Posterior cingulate gyrus (tissue), 11 donors: ENCODE measurements at regions of chr9 and their contacts with region 1.

Region 1: GRCh38 chr9:36862206-36863145 is 171.6 kb downstream of the PAX5 start:
- DNase-seq: peak in 9 of 10 donors; percentile 42 to 93 (median 62)

Region 2: GRCh38 chr9:36794461-36794860 is 68.0 kb before region 1 on chr9:
- intact Hi-C with region 1: no loop called
- DNase-seq: no peak

Region 3: GRCh38 chr9:37329576-37329975 is 467.1 kb after region 1 on chr9:
- intact Hi-C with region 1: loop called (anchors 10 kb)
- DNase-seq: no peak